ENCODE measurements at regions of chrX and their contacts with region 1.

Region 1: DNA sequence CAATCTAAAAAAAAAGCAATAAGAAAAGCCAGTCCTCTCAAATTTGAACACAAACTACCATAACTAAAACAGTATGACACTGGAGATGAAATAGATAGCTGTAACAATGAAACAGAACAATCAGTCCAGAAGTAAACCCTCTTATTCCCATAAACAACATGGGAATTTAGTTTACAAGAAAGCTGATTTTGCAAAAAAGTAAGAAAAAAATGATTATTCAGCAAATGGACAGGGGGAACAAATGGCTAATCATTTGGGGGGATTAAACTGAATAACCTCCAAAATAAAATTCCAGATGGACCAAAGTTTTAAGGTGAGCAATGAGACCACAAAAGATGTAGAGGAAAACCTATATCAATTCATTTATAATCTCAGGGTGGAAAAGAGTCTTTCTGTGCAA is 16.1 kb upstream of the SASH3 start:
- DNase-seq: no peak
- ATAC-seq: no peak
- H3K4me3 ChIP-seq: no peak overlapping the region
- H3K27ac ChIP-seq: no peak overlapping the region
- H3K4me1 ChIP-seq: no peaks in the 10 kb centered on the region
- H3K27me3 ChIP-seq: peaks cover 1% of the 10 kb centered on the region
- CTCF ChIP-seq: no peak
- POLR2A ChIP-seq: no peak
- RAD21 ChIP-seq: no peak

Region 2: GRCh38 chrX:129549124-129549523 is 214.5 kb before region 1 on chrX:
- CTCF ChIA-PET with region 1: no interaction called
- POLR2A ChIA-PET with region 1: no interaction called
- dilution Hi-C with region 1: no loop called
- in situ Hi-C with region 1: no loop called
- intact Hi-C with region 1: no loop called
- DNase-seq: no peak
- ATAC-seq: no peak
- H3K4me3 ChIP-seq: no peak overlapping the region
- H3K27ac ChIP-seq: no peak overlapping the region
- H3K4me1 ChIP-seq: no peaks in the 10 kb centered on the region
- H3K27me3 ChIP-seq: no peaks in the 10 kb centered on the region
- CTCF ChIP-seq: no peak
- POLR2A ChIP-seq: no peak
- RAD21 ChIP-seq: no peak

Region 3: DNA sequence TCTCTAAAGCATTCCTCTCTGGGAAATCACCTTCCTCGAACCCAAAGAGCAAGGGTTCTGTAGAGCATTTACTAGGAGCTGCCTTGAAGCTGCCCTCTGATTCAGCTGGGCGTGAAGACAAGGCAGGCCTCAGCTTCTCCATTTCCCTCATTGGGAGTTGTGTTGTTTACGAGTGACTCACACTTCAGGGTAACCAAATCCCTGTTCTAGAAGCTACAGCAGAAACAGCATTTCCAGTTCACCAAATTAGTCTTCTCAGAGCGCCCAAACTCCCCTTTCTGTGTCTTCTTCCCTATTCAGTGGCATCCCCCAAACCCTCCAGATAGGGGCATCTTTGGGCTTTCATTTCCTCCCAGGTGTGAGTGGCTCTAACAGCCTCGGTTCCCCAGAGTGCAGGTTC is 25.8 kb before region 1 on chrX:
- CTCF ChIA-PET with region 1: no interaction called
- POLR2A ChIA-PET with region 1: interaction called, 14 read pairs
- dilution Hi-C with region 1: no loop called
- in situ Hi-C with region 1: no loop called
- intact Hi-C with region 1: no loop called
- DNase-seq: peak; percentile 65
- ATAC-seq: peak; percentile 84
- H3K4me3 ChIP-seq: no peak overlapping the region
- H3K27ac ChIP-seq: no peak overlapping the region; the same call in 1 of the 2 replicates
- H3K4me1 ChIP-seq: peaks cover 7% of the 10 kb centered on the region; the same call in 1 of the 2 replicates
- H3K27me3 ChIP-seq: peaks cover 20% of the 10 kb centered on the region
- CTCF ChIP-seq: no peak
- POLR2A ChIP-seq: no peak
- RAD21 ChIP-seq: no peak